ENCODE measurements at regions of chr20 and their contacts with region 1.

Region 1: GRCh38 chr20:50070991-50071888 is 41.7 kb downstream of the UBE2V1 start:
- DNase-seq: peak; percentile 94 to 100
- H3K4me3 ChIP-seq: peak overlapping the region; percentile 50
- H3K4me3 Mint-ChIP-seq: peak overlapping the region; percentile 77
- H3K27ac Mint-ChIP-seq: peak overlapping the region; percentile 20
- H3K4me1 ChIP-seq: peaks cover 13% of the 10 kb centered on the region
- H3K4me1 Mint-ChIP-seq: peaks cover 9% of the 10 kb centered on the region
- H3K27me3 ChIP-seq: no peaks in the 10 kb centered on the region
- H3K27me3 Mint-ChIP-seq: no peaks in the 10 kb centered on the region
- CTCF ChIP-seq: peak; percentile 100

Region 2: DNA sequence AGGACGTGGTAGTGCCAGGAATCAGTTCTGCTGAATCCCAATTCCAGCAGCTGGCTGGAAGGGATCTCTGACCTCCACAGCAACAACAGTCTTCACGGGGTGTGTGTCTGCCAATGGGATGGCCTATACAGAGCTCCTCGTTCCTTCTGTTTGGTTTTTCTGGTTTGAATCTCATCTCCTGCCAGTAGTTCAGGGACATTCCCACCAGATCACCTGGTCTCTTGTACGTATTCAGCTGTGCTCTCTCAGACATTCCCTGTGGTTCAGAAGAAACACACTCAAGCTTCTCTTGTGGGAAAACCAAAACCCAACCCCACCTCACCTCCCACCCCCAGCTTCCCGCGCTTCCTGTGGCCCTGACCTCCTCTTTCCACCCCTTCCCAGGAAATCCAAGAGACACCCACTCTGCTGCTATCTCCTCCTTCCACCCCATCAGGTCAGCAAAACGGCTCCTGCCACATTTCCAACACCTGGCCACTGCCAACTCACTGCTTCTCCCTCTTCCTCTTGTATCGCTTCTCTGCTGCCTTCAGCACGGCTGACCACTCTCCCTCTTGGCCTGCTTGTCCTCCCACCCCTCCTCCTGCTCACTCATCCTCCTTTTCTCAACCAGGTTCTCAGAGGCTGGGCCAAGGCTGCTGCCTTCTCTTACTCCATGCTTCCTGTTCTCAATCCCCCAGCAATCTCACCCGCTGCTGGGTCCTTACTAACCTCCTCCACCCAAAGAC is 440.0 kb before region 1 on chr20:
- CTCF ChIA-PET with region 1: no interaction called
- POLR2A ChIA-PET with region 1: no interaction called
- intact Hi-C with region 1: no loop called
- DNase-seq: no peak
- H3K4me3 ChIP-seq: no peak overlapping the region
- H3K4me3 Mint-ChIP-seq: no peak overlapping the region
- H3K27ac Mint-ChIP-seq: peak overlapping the region; percentile 55
- H3K4me1 ChIP-seq: peaks cover 3% of the 10 kb centered on the region
- H3K4me1 Mint-ChIP-seq: peaks cover 8% of the 10 kb centered on the region
- H3K27me3 ChIP-seq: no peaks in the 10 kb centered on the region
- H3K27me3 Mint-ChIP-seq: no peaks in the 10 kb centered on the region
- CTCF ChIP-seq: no peak

Region 3: DNA sequence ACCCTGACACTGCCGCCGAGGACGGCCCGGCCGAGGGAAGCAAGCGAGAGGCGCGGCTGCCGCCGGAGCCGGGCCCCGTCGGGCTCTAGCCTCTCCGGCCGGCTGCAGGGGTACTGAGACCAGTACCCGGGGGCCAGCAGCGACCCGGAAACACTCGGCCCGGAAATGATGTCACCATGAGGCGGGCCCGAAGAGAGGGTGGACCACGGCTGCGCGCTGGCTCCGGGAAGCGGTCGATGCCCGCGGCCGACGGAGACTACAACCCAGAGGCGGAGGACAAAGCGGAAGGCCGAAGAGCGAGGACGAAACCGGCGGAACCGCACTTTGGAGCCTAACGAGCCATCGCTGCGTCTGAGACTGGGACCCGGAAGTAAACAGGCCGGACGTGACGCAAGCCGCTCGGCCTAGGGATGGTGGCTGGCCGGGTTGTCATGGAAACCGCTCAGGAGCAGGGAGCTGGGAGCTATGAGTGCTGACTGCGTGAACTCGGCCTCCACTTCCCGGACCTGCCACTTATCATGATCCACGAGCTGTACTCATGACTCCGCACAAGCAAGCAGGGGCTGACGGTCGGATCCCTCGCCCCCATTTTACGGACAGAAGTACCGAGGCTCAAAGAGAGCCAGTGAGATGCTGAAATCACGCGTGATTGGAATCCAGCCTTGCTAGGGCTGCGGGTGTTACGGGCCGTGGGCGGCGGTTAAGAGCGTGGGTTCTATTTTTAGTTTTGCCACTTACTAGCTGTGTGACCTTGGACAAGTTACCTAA is 155.7 kb before region 1 on chr20 and contains the start of gene SPATA2:
- CTCF ChIA-PET with region 1: interaction called, 13 read pairs
- POLR2A ChIA-PET with region 1: no interaction called
- intact Hi-C with region 1: no loop called
- DNase-seq: peak; percentile 100
- H3K4me3 ChIP-seq: peak within 1 kb of the TSS; percentile 80
- H3K4me3 Mint-ChIP-seq: peak within 1 kb of the TSS; percentile 99
- H3K27ac Mint-ChIP-seq: peak within 1 kb of the TSS; percentile 100
- H3K4me1 ChIP-seq: peaks cover 20% of the 10 kb centered on the region
- H3K4me1 Mint-ChIP-seq: peaks cover 25% of the 10 kb centered on the region
- H3K27me3 ChIP-seq: no peaks in the 10 kb centered on the region
- H3K27me3 Mint-ChIP-seq: no peaks in the 10 kb centered on the region
- CTCF ChIP-seq: no peak
- total RNA-seq, gene SPATA2: 29.0 TPM in 2 replicates

Region 4: DNA sequence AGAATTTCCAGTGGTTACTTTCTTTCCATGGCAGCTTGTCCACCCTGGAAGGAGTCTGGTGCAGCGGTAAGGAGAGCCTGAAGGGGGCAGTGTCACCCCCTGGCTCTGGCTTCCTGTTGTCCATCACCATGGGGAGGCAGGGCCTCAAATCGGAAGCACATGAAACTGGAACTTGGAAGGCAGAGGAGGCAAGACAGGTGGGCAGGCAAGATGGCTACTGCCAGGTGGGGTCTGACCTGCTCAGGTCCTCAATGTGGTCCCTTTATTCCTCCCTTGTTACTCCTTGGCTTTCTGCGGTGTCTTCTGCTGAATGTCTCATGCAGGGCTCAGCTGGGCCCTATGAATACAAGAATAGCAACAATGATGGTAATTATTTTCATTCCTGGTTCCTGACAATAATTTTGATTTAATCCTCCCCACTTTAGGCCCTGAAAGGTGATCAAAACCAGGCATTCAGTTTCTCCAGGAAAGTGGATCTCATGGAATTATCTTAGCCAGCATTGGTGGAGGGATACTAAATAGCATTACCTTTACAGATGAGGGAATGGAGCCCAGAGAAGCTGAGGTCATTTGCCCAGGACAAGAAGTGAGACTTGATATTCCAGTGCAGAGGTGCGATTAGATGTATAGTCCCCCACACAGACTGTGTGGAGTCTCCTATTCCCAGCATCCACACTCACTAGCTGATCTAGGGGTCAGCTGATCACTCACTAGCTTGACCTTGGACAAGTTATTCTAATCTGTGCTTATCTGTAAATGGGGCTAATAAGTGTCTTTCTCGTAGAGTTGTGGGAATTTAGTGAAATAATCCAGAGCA is 106.1 kb before region 1 on chr20:
- CTCF ChIA-PET with region 1: interaction called, 31 read pairs
- POLR2A ChIA-PET with region 1: no interaction called
- intact Hi-C with region 1: no loop called
- DNase-seq: peak; percentile 82 to 85
- H3K4me3 ChIP-seq: no peak overlapping the region
- H3K4me3 Mint-ChIP-seq: no peak overlapping the region
- H3K27ac Mint-ChIP-seq: peak overlapping the region; percentile 49
- H3K4me1 ChIP-seq: peaks cover 47% of the 10 kb centered on the region
- H3K4me1 Mint-ChIP-seq: peaks cover 29% of the 10 kb centered on the region
- H3K27me3 ChIP-seq: no peaks in the 10 kb centered on the region
- H3K27me3 Mint-ChIP-seq: no peaks in the 10 kb centered on the region
- CTCF ChIP-seq: peak; percentile 90 to 92

Region 5: DNA sequence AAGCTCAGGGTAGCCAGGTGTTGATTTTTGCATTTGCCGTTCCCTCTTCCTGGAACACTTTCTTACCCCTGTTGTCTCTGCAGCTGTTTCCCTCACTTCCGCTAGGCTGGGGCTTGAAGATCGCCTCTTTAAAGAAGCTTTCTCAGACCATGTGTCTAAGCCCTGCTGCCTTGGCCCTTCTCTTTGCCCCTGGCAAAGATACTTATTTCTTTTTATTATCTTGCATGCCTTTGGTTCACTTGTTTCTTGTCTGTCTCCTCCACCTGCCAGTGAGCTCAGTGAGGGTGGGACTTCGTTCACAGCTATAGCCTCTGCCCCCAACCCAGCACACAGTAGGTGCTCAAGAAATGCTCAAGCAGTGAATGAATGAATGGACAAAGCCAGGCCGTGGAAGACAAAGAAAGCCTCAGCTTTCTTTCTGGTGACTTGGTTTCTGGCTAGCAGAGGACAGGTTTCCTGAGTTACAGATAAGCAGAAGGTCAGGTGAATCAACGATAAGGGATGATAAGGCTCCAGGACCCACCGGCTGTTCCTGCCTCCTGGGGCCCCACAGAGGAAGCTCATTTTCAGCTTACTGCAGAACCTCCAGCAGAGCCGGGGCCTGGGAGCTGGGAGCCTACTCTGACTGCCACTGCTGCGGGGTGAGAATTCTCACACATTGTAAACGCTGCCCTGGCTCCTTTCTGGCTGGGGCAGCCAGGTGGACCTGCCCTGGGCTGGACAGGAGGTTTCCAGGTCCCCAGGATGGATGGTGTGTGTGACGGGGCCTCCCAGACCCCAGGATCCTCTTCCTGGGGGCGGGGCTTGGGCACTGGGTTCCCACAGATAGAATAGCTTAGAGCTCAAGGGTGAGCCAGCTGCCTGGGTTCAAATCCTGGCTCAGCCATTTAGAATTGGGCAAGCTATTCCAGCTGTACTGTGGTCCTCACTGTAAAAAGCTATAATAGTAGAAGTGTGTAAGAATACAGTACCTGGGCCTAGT is 58.7 kb before region 1 on chr20:
- CTCF ChIA-PET with region 1: interaction called, 26 read pairs
- POLR2A ChIA-PET with region 1: interaction called, 9 read pairs
- intact Hi-C with region 1: loop called (anchors 1 kb)
- DNase-seq: peak; percentile 87 to 95
- H3K4me3 ChIP-seq: no peak overlapping the region
- H3K4me3 Mint-ChIP-seq: no peak overlapping the region
- H3K27ac Mint-ChIP-seq: peak overlapping the region; percentile 68
- H3K4me1 ChIP-seq: peaks cover 44% of the 10 kb centered on the region
- H3K4me1 Mint-ChIP-seq: peaks cover 29% of the 10 kb centered on the region
- H3K27me3 ChIP-seq: no peaks in the 10 kb centered on the region
- H3K27me3 Mint-ChIP-seq: no peaks in the 10 kb centered on the region
- CTCF ChIP-seq: no peak

Region 6: DNA sequence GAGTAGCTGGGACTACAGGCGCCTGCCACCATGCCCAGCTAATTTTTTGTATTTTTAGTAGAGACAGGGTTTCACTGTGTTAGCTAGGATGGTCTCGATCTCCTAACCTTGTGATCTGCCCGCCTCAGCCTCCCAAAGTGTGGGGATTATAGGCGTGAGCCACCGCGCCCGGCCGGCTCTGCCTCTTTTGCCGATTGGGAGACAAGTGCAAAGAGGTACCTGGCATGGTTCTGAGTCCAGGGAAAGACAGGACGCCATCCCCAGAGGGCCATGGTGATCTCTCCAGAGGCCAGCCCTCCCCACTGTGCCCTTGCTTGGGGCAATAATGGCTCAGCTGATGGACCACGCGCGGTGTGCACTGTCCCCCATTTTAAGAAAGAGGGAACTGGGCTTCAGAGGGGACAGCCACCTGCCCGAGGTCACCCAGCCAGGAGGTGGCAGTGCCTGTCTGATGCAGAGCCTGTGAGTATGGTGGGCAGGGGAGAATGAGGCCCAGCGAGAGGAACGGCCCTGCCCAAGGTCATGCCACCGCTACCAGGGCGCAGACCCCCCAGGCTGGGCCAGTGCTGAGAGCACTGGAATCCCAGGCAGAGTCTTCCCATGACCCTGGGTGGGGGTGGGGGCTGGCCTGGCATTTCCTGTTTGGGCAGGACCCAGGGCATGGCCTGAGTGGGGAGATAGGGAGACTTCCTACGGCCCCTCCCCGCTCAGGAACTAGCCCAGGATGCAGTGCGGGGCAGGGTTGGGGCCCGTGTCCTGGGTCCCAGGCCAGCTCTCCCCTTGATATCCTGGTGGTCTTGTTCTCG is 27.5 kb before region 1 on chr20:
- CTCF ChIA-PET with region 1: interaction called, 30 read pairs
- POLR2A ChIA-PET with region 1: no interaction called
- intact Hi-C with region 1: no loop called
- DNase-seq: no peak
- H3K4me3 ChIP-seq: no peak overlapping the region
- H3K4me3 Mint-ChIP-seq: no peak overlapping the region
- H3K27ac Mint-ChIP-seq: no peak overlapping the region
- H3K4me1 ChIP-seq: peaks cover 18% of the 10 kb centered on the region
- H3K4me1 Mint-ChIP-seq: peaks cover 14% of the 10 kb centered on the region
- H3K27me3 ChIP-seq: no peaks in the 10 kb centered on the region
- H3K27me3 Mint-ChIP-seq: no peaks in the 10 kb centered on the region
- CTCF ChIP-seq: no peak

Region 7: GRCh38 chr20:50115591-50116372 is 44.5 kb after region 1 on chr20:
- CTCF ChIA-PET with region 1: interaction called, 14 read pairs
- POLR2A ChIA-PET with region 1: interaction called, 4 read pairs
- intact Hi-C with region 1: no loop called
- DNase-seq: peak; percentile 98
- H3K4me3 ChIP-seq: peak overlapping the region; percentile 43
- H3K4me3 Mint-ChIP-seq: peak overlapping the region; percentile 96
- H3K27ac Mint-ChIP-seq: peak overlapping the region; percentile 85
- H3K4me1 ChIP-seq: peaks cover 30% of the 10 kb centered on the region
- H3K4me1 Mint-ChIP-seq: peaks cover 44% of the 10 kb centered on the region
- H3K27me3 ChIP-seq: no peaks in the 10 kb centered on the region
- H3K27me3 Mint-ChIP-seq: no peaks in the 10 kb centered on the region
- CTCF ChIP-seq: no peak

Region 8: DNA sequence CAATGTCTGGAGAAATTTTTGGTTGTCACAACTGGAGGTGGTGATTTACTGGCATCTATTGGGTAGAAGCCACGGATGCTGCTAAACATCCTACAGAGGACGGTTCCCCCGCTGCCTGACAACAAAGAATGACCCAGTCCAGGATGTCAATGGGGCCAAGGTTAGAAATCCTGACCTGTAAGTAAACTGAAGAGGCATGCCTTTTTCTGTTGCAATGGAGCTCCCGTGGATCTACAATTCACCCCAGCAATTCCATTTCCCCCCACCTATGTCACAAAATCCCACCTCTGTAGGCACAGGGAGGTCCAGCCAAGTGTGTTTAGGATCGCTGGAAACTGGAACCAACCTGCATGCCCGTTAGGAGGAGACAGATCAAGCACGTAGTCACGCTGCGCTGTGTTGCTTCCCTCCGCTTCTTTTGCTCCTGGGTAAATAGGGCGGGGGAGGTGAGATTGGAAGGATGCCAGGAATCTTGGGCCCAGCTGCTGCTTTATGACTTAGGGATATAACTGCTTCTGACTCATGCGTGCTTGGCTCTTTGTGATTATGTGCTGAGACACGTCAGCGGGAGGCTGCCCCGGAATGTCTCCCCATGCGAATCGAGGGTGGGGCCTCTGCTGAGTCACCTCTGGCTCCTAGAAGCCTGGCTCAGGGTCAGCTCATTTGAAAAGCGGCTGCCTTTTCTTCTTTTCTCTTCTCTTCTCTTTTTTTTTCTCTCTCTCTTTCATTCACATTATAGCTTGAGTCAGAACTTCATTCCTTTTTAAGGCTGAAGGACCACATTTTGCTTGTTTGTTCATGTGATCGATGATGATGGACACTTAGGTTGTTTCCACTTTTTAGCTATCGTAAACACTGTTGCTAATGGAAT is 94.7 kb after region 1 on chr20:
- CTCF ChIA-PET with region 1: interaction called, 10 read pairs
- POLR2A ChIA-PET with region 1: interaction called, 3 read pairs
- intact Hi-C with region 1: loop called (anchors 2 kb)
- DNase-seq: peak; percentile 100
- H3K4me3 ChIP-seq: peak overlapping the region; percentile 36
- H3K4me3 Mint-ChIP-seq: peak overlapping the region; percentile 78
- H3K27ac Mint-ChIP-seq: peak overlapping the region; percentile 94
- H3K4me1 ChIP-seq: peaks cover 46% of the 10 kb centered on the region
- H3K4me1 Mint-ChIP-seq: peaks cover 25% of the 10 kb centered on the region
- H3K27me3 ChIP-seq: no peaks in the 10 kb centered on the region
- H3K27me3 Mint-ChIP-seq: no peaks in the 10 kb centered on the region
- CTCF ChIP-seq: peak in 1 of 2 experiments; percentile 23

Measured in Caco-2 (cell line).